ENCODE measurements at regions of chr7 and their contacts with region 1.

Region 1: DNA sequence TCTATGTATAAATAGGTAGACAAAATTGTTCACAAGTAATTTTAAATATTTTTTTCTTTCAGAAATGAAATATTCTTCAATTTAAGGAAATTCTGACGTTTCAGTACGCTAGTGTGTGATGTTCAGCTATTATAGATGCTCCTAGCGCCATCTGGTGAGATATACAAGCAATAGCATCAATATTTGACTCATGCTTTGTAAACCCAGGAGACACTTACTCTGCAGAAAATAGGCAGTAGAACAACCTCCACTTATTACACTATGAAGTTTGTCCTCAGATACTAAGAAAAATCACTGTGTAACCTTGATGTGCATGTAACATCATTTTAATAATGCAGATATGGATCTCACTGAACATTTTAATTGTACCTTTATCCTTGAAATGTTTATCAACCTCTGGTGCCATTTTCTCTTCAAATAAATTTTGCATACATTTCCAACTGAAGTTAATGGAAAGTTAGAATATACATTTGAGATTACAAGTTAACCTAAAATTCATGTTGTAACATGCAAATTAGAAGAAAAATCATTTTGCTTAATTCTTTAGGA is 151.5 kb upstream of the FAM3C start:
- DNase-seq: no peak
- ATAC-seq: peak; percentile 78 to 88

Region 2: DNA sequence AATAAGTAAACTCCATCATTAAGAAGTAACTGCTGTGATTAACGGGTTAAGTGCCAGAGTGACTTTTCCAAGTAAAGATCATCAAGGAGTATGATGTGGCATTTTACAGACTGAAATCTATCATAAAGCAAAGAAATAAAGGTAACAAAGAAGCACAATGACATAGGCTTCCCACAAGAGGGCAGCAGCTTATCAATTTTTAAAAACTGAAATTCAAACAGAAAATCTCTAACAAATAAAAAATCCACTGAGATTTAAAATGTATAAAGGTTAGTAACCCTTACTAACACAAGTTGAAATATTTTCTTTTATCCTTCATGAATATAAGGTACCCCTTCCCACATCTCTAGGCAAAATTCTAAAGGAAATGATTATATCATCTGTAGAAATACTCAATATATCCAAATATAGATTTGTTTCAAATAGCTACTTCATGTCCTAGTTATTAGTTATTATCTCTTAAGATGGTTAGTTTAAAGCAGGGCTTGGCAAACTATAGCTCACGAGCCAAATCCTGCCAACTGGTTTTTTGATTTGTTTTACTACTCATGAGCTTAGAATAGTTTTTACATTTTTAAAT is 180.7 kb before region 1 on chr7:
- intact Hi-C with region 1: loop called (anchors 1 to 5 kb)
- DNase-seq: no peak
- ATAC-seq: no peak

Measured in left cardiac atrium (tissue), 4 donors.